Dorsolateral prefrontal cortex (tissue), 120 donors: ENCODE measurements at regions of chr3 and their contacts with region 1.

Region 1: GRCh38 chr3:59641169-59641899 is 591.5 kb upstream of the CFAP20DC start:
- DNase-seq: peak in 4 of 10 donors; percentile 6 to 47 (median 41)
- H3K4me3 ChIP-seq: no peak overlapping the region
- H3K27ac ChIP-seq: no peak overlapping the region
- H3K27me3 ChIP-seq: no peaks in the 10 kb centered on the region
- CTCF ChIP-seq: no peak

Region 2: GRCh38 chr3:59809710-59810444 is 168.5 kb after region 1 on chr3:
- intact Hi-C with region 1: loop called in 1 of 2 experiments (anchors 10 kb)
- DNase-seq: no peak
- H3K4me3 ChIP-seq: no peak overlapping the region
- H3K27ac ChIP-seq: peak overlapping the region in 6 of 59 donors; percentile 22 to 65 (median 35)
- H3K27me3 ChIP-seq: no peaks in the 10 kb centered on the region
- CTCF ChIP-seq: peak; percentile 28 to 75 (median 59)